Naive thymus-derived CD4-positive, alpha-beta T cell (primary cell): ENCODE measurements at regions of chr4 and their contacts with region 1.

Region 1: DNA sequence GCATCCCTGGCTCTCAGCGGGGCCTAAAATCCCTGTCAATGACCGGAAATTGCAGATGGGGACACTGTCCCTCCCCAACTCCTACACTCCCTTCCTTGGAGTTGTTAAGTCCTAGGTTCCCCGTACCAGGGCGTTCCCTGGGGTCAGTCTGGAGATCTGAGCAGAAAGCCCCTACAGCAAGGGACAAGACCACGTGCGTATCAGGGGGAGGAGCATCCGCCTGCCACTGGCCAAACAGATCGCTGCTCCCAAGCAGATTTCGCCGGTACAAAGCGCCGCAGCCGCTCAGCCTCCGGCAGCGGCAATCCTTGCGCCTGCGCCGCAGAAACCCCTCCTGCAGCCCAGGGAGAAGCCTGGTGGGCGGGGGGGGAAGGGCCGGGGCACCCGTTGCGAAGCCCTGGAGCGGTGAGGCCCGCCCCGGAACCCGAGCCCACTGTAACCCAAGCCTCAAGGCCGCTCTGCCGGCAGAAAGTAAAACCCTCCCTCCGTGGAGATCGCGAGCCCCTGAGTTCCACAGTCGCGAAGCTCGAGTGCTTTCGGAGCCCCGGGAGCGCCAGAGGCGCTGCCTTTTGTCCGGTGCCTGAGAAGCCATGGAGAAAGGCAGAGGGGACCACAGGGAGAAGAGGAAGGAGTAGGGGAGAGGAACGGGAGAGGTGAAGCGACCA is 2.7 kb downstream of the CRMP1 start:
- DNase-seq: no peak
- ATAC-seq: no peak
- H3K4me3 ChIP-seq: no peak overlapping the region
- H3K4me3 Mint-ChIP-seq: no peak overlapping the region
- H3K27ac ChIP-seq: no peak overlapping the region
- H3K27ac Mint-ChIP-seq: no peak overlapping the region
- H3K4me1 ChIP-seq: no peaks in the 10 kb centered on the region
- H3K4me1 Mint-ChIP-seq: peaks cover 0 to 13% (median 9%) of the 10 kb centered on the region in 7 donors
- H3K27me3 ChIP-seq: peaks cover 0 to 14% of the 10 kb centered on the region in 2 donors
- H3K27me3 Mint-ChIP-seq: peaks cover 62 to 76% (median 65%) of the 10 kb centered on the region in 5 donors

Region 2: GRCh38 chr4:4859390-4859842 is 1030.8 kb before region 1 on chr4 and contains the start of gene MSX1:
- CTCF ChIA-PET with region 1: no interaction called
- POLR2A ChIA-PET with region 1: no interaction called
- intact Hi-C with region 1: loop called in 1 of 2 experiments (anchors 10 kb)
- DNase-seq: no peak
- ATAC-seq: peak; percentile 73
- H3K4me3 ChIP-seq: peak within 1 kb of the TSS; percentile 52
- H3K4me3 Mint-ChIP-seq: peak within 1 kb of the TSS; percentile 58 to 92 (median 85)
- H3K27ac ChIP-seq: no peak within 1 kb of the TSS
- H3K27ac Mint-ChIP-seq: peak within 1 kb of the TSS in 1 of 9 donors; percentile 23
- H3K4me1 ChIP-seq: peaks cover 11 to 13% of the 10 kb centered on the region in 2 donors
- H3K4me1 Mint-ChIP-seq: peaks cover 18 to 54% (median 49%) of the 10 kb centered on the region in 7 donors
- H3K27me3 ChIP-seq: peaks cover 18 to 37% of the 10 kb centered on the region in 2 donors
- H3K27me3 Mint-ChIP-seq: peaks cover 68 to 85% (median 82%) of the 10 kb centered on the region in 5 donors
- total RNA-seq, gene MSX1: not detected

Region 3: DNA sequence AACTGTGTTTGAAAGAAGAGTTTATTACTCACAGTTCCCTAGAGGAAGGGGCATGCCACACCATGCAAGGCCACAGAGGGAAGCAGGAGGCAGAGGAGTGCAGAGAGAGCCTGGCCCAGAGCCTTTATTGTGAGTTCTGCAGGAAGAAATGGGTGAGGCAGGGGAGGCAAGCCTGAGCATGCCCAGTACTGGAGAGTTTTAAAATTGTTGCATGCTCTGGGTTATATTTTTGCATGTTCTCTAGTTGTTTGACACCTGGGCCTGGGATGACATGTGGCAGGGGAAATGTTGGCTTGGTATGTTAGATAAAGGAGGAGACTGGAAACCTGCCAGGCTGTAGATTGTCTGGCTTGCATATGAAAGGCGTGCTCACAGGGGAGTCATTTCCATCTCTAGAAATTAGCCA is 22.4 kb after region 1 on chr4:
- CTCF ChIA-PET with region 1: no interaction called
- POLR2A ChIA-PET with region 1: no interaction called
- intact Hi-C with region 1: no loop called
- DNase-seq: no peak
- ATAC-seq: no peak
- H3K4me3 ChIP-seq: no peak overlapping the region
- H3K4me3 Mint-ChIP-seq: no peak overlapping the region
- H3K27ac ChIP-seq: no peak overlapping the region
- H3K27ac Mint-ChIP-seq: no peak overlapping the region
- H3K4me1 ChIP-seq: no peaks in the 10 kb centered on the region
- H3K4me1 Mint-ChIP-seq: peaks cover 0 to 3% (median 0%) of the 10 kb centered on the region in 7 donors
- H3K27me3 ChIP-seq: no peaks in the 10 kb centered on the region
- H3K27me3 Mint-ChIP-seq: peaks cover 0 to 9% (median 6%) of the 10 kb centered on the region in 5 donors

Region 4: GRCh38 chr4:6200011-6200921 is 310.1 kb after region 1 on chr4 and contains the start of gene JAKMIP1:
- CTCF ChIA-PET with region 1: no interaction called
- POLR2A ChIA-PET with region 1: no interaction called
- intact Hi-C with region 1: no loop called
- DNase-seq: peak; percentile 1 to 96 (median 43)
- ATAC-seq: peak; percentile 81
- H3K4me3 ChIP-seq: peak within 1 kb of the TSS; percentile 43
- H3K4me3 Mint-ChIP-seq: peak within 1 kb of the TSS; percentile 61 to 89 (median 76)
- H3K27ac ChIP-seq: no peak within 1 kb of the TSS
- H3K27ac Mint-ChIP-seq: peak within 1 kb of the TSS in 2 of 9 donors; percentile 71 to 73
- H3K4me1 ChIP-seq: peaks cover 8 to 30% of the 10 kb centered on the region in 2 donors
- H3K4me1 Mint-ChIP-seq: peaks cover 5 to 28% (median 17%) of the 10 kb centered on the region in 7 donors
- H3K27me3 ChIP-seq: peaks cover 0 to 6% of the 10 kb centered on the region in 2 donors
- H3K27me3 Mint-ChIP-seq: peaks cover 36 to 66% (median 45%) of the 10 kb centered on the region in 5 donors
- total RNA-seq, gene JAKMIP1: 0.66 to 15.3 (median 4.1) TPM in 3 of 5 experiments, not detected in the others